Tibial artery (tissue), 4 donors: ENCODE measurements at regions of chr1 and their contacts with region 1.

Region 1: GRCh38 chr1:32413507-32414185 is 19.4 kb upstream of the BSDC1 start:
- DNase-seq: peak in 1 of 2 donors; percentile 55
- H3K4me3 ChIP-seq: no peak overlapping the region
- H3K27ac ChIP-seq: no peak overlapping the region
- H3K4me1 ChIP-seq: no peaks in the 10 kb centered on the region
- H3K27me3 ChIP-seq: peaks cover 0 to 5% of the 10 kb centered on the region in 2 donors
- CTCF ChIP-seq: peak; percentile 67 to 81

Region 2: GRCh38 chr1:32400876-32401631 is 12.6 kb before region 1 on chr1:
- intact Hi-C with region 1: loop called (anchors 2 kb)
- DNase-seq: peak; percentile 92
- H3K4me3 ChIP-seq: no peak overlapping the region
- H3K27ac ChIP-seq: peak overlapping the region; percentile 50 to 65
- H3K4me1 ChIP-seq: peaks cover 0 to 5% (median 0%) of the 10 kb centered on the region in 4 donors
- H3K27me3 ChIP-seq: no peaks in the 10 kb centered on the region
- CTCF ChIP-seq: peak; percentile 86 to 90

Region 3: GRCh38 chr1:32464716-32465577 is 51.3 kb after region 1 on chr1 and contains the start of gene ZBTB8B:
- intact Hi-C with region 1: no loop called
- DNase-seq: peak; percentile 55 to 76
- H3K4me3 ChIP-seq: peak within 1 kb of the TSS; percentile 36 to 58
- H3K27ac ChIP-seq: no peak within 1 kb of the TSS
- H3K4me1 ChIP-seq: peaks cover 0 to 19% (median 15%) of the 10 kb centered on the region in 4 donors
- H3K27me3 ChIP-seq: peaks cover 0 to 46% of the 10 kb centered on the region in 2 donors
- CTCF ChIP-seq: peak in 1 of 2 experiments; percentile 5